ENCODE measurements at regions of chr1 and their contacts with region 1.

Region 1: DNA sequence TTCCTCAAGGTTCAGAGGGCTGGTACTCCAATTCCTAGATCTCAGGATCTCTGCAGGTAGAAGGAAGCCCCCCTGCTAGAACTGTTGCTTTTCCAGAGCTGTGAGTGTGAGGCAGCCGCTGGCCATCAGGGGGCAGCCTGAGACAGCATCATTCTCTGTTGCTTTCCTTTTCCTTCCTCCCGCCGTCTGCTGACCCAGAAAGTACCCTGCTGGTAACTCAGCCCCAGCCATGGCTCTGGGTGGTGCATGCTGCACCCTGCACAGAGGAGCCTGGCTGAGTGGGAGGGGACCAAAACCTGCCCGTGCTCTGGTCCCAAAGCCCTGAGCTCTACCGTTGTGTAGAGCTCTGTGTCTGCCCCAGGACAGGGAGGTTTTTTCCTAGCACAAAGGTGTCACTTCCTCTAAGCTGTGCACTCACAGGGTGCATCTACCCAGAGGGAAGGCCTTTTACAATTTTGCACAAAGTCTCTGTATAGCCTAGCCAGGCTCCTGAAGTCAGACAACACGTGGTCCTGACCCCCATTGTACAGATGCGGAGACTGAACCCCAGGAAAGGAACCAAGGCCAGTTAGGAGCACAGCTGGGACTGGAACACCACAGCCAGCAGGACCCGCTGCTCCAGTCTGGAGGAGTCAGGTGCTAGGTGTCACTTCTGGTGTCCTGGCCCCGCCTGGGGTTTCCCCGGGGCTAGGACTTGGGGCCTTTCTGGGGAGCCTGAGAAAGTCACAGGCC is 5.6 kb upstream of the FAM131C start:
- DNase-seq: peak; percentile 82 to 84
- H3K4me3 ChIP-seq: no peak overlapping the region
- H3K27ac ChIP-seq: no peak overlapping the region
- H3K4me1 ChIP-seq: peaks cover under 1 to 42% of the 10 kb centered on the region in 2 donors
- H3K27me3 ChIP-seq: no peaks in the 10 kb centered on the region
- CTCF ChIP-seq: peak; percentile 69 to 97 (median 92)
- POLR2A ChIP-seq: no peak

Region 2: GRCh38 chr1:16139473-16139962 is 60.4 kb after region 1 on chr1:
- intact Hi-C with region 1: loop called (anchors 10 kb)
- DNase-seq: no peak
- H3K4me3 ChIP-seq: no peak overlapping the region
- H3K27ac ChIP-seq: peak overlapping the region in 2 of 3 donors; percentile 66 to 67
- H3K4me1 ChIP-seq: peaks cover 42 to 53% of the 10 kb centered on the region in 2 donors
- H3K27me3 ChIP-seq: no peaks in the 10 kb centered on the region
- CTCF ChIP-seq: no peak
- POLR2A ChIP-seq: no peak

Region 3: DNA sequence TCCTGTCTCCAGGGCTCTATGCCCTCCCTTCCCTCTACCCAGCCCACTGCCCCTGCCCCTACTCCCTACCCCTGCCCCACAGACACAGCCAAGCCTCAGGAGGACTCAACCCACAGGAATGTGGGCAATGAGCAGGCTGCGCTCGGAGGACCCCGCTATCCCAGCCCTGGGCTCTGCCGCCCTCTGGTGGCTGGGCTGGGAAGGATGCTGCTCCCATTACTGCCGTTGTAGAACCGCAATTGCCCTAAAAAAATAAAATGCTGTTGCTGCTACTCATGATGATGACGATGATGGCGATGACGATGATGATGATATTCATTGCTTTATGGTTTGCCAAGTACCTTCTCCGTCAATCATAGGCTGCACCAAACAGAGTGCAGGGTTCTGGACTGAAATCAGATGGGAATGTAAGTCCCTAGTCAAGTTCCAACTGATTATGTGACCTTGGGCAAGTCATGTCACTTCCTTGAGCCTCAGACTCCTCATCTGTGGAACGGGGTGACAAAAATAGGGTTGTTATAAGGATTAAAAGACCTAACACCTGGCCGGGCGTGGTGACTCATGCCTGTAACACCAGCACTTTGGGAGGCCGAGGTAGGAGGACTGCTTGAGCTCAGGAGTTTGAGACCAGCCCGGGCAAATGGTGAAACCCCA is 108.8 kb after region 1 on chr1:
- intact Hi-C with region 1: loop called (anchors 2 kb)
- DNase-seq: peak; percentile 73 to 79
- H3K4me3 ChIP-seq: no peak overlapping the region
- H3K27ac ChIP-seq: no peak overlapping the region
- H3K4me1 ChIP-seq: peaks cover 35 to 57% of the 10 kb centered on the region in 2 donors
- H3K27me3 ChIP-seq: no peaks in the 10 kb centered on the region
- CTCF ChIP-seq: peak; percentile 88 to 99 (median 98)
- POLR2A ChIP-seq: no peak

Region 4: DNA sequence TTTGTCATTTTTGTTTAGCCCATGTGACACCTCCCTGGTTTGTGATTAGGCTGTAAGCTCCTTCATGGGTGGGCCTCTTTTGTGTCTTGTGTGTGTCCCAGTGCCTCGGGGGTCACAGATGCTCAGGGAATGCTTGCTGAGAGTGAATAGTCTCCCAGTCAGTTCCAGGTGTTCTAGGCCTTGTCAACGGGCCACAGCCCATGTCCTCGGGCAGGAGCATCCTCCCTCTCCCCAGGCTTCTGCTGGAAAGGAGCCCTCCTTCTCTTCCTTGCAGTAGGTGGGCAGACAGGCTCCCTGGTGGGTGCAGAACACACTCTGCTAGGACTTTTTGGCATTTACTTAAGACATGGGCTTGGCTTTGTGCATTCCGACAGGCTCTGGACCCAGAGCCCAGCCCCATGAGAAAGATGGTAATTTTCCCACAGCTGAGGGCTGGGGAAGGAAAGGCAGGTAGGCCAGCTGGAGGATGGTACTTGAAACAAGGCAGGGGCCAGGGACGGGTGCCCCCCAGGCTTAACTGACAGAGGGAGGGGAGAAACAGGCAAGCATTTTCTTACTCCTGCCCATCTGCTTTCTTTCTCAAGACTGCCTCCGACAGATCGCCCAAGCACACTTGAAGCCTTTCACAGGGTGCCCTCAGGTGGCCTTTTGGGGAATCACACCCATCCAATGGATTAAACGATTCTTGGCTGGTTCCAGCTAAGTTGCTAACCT is 165.0 kb after region 1 on chr1:
- intact Hi-C with region 1: loop called (anchors 5 kb)
- DNase-seq: peak; percentile 83 to 87
- H3K4me3 ChIP-seq: no peak overlapping the region
- H3K27ac ChIP-seq: peak overlapping the region in 1 of 3 donors; percentile 45
- H3K4me1 ChIP-seq: peaks cover 15 to 26% of the 10 kb centered on the region in 2 donors
- H3K27me3 ChIP-seq: no peaks in the 10 kb centered on the region
- CTCF ChIP-seq: peak; percentile 56 to 93 (median 86)
- POLR2A ChIP-seq: no peak

Region 5: GRCh38 chr1:16354619-16355018 is 275.5 kb after region 1 on chr1:
- intact Hi-C with region 1: no loop called
- DNase-seq: no peak
- H3K4me3 ChIP-seq: no peak overlapping the region
- H3K27ac ChIP-seq: no peak overlapping the region
- H3K4me1 ChIP-seq: peaks cover 13 to 14% of the 10 kb centered on the region in 2 donors
- H3K27me3 ChIP-seq: no peaks in the 10 kb centered on the region
- CTCF ChIP-seq: no peak
- POLR2A ChIP-seq: no peak

Region 6: DNA sequence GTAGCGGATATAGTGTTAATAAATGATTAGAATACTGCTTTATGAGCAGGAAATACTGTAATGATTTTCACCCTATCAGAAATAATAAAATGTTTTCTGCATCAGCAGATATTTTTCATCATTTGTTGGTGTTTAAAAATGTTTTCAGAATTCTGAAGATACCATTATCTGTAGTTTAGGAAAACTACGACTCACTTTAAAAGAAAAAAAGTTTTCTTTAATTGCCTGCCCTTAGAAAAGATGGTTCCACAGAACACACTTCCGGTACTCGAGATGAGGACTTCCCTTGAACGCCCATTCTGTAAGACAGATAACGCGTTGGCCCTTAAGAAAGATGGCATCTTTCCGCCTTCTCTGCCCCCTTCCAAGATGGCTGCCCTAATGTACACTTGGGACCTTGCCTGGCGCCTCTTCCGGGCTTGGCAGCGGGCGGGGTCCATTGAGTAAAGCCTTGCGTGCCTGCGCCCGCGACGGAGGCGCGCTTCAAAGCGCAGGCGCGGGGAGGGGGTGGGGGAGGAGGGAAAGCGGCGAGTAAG is 287.7 kb after region 1 on chr1 and contains the start of gene SZRD1:
- intact Hi-C with region 1: loop called (anchors 5 kb)
- DNase-seq: peak; percentile 98
- H3K4me3 ChIP-seq: peak within 1 kb of the TSS; percentile 34 to 86 (median 62)
- H3K27ac ChIP-seq: peak within 1 kb of the TSS; percentile 91 to 99 (median 99)
- H3K4me1 ChIP-seq: peaks cover 17 to 25% of the 10 kb centered on the region in 2 donors
- H3K27me3 ChIP-seq: no peaks in the 10 kb centered on the region
- CTCF ChIP-seq: no peak
- POLR2A ChIP-seq: no peak
- total RNA-seq, gene SZRD1: 59.4 to 82.8 (median 74.4) TPM

Measured in thyroid gland (tissue), 4 donors.